Heart left ventricle (tissue), 16 donors: ENCODE measurements at regions of chr5 and their contacts with region 1.

Region 1: DNA sequence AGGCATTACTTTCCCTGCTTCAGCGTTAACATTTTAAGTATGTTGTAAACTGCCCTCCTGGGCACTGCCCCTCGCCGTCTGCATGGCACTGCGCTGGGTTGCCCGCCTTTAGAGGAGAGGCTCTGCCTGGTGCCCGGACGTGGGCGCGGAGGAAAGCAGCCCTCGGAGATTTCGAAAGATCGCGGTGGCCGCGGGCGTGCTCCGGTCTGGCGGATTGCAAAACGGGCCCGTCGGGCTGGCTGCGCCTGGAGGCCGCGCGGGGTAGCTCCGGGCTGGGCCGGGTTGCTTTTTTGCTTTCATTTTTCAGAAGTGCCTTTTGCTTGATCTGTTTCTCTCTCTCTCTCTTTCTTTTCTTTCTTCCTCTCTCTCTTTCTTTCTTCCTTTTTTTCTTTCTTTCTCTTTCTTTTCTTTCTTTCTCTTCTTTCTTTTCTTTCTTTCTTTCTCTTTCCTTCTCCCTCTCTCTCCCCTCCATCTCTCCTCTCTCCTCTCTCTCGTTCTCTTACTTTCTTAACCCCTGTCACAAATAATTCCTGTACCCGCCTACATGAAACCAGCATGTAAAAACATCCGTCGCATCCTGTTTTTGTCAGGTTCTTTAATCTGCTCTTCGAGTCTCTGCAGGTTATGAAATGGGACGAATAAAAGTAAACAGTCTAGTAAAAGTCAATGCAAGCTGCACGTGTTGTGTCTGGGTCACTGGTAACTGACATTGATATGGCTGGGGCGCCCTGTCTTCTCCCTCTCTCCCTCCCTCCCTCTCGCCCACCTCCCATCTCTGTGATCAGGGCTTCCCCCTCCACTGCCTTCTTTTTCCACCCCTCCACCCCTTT is 1.7 kb downstream of the FST start:
- DNase-seq: peak; percentile 49 to 88 (median 74)
- ATAC-seq: peak; percentile 59 to 83 (median 72)
- H3K4me3 ChIP-seq: peak overlapping the region; percentile 16 to 93 (median 70)
- H3K27ac ChIP-seq: peak overlapping the region in 10 of 12 donors; percentile 15 to 68 (median 56)
- H3K4me1 ChIP-seq: peaks cover 0 to 38% (median 7%) of the 10 kb centered on the region in 12 donors
- H3K27me3 ChIP-seq: peaks cover 0 to 24% (median 0%) of the 10 kb centered on the region in 9 donors
- CTCF ChIP-seq: peak in 6 of 12 donors; percentile 8 to 42 (median 17)
- POLR2A ChIP-seq: no peak

Region 2: DNA sequence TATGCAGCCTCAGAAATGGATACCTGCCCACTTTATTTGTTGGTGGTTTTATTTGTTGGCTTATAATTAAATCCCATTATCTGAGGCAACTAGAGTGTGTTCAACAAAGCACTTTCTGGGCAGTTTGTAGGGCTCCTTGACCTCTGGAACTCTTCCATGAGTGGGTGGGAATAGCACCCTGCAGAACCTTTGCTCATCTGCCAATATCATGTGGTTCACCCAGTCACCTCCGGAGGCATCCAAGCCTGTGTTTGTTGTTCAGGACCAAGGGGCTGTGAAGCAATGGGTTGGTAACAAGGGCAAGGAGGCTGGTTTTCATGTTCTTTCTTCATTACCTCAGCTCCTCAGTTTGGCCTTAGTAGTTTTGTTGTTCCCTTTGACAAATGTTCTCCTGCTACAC is 392.3 kb after region 1 on chr5:
- intact Hi-C with region 1: loop called in 9 of 10 experiments (anchors 2 to 10 kb)
- DNase-seq: no peak
- ATAC-seq: no peak
- H3K4me3 ChIP-seq: no peak overlapping the region
- H3K27ac ChIP-seq: no peak overlapping the region
- H3K4me1 ChIP-seq: no peaks in the 10 kb centered on the region
- H3K27me3 ChIP-seq: no peaks in the 10 kb centered on the region
- CTCF ChIP-seq: peak in 1 of 12 donors; percentile 5
- POLR2A ChIP-seq: no peak

Region 3: DNA sequence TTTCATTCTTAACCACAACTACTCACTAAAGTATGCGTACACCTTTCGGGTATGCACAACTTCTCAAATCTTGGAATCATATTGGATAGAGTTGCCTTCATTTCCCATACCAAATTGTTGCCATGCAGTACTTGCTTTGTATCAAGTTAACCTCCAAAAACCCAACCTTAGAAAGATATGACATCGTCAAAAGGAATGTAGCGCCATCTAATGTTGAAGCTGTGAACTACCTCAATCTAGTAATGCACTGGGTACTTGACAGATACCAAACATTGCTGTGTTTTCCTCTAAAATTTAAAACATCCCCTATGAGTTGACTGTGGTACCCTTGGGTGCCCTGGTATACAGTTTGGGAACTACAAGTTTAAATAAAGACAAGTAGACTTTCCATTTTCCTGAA is 509.8 kb after region 1 on chr5:
- intact Hi-C with region 1: loop called in 6 of 10 experiments (anchors 5 to 10 kb)
- DNase-seq: no peak
- ATAC-seq: peak in 1 of 4 donors; percentile 16
- H3K4me3 ChIP-seq: no peak overlapping the region
- H3K27ac ChIP-seq: no peak overlapping the region
- H3K4me1 ChIP-seq: no peaks in the 10 kb centered on the region
- H3K27me3 ChIP-seq: no peaks in the 10 kb centered on the region
- CTCF ChIP-seq: peak in 11 of 12 donors; percentile 23 to 50 (median 43)
- POLR2A ChIP-seq: no peak

Region 4: GRCh38 chr5:54229041-54229780 is 747.1 kb after region 1 on chr5:
- intact Hi-C with region 1: loop called in 5 of 10 experiments (anchors 5 kb)
- DNase-seq: peak; percentile 54 to 77 (median 65)
- ATAC-seq: peak in 3 of 4 donors; percentile 63 to 76 (median 73)
- H3K4me3 ChIP-seq: no peak overlapping the region
- H3K27ac ChIP-seq: no peak overlapping the region
- H3K4me1 ChIP-seq: peaks cover 0 to 51% (median 21%) of the 10 kb centered on the region in 12 donors
- H3K27me3 ChIP-seq: no peaks in the 10 kb centered on the region
- CTCF ChIP-seq: peak; percentile 84 to 95 (median 91)
- POLR2A ChIP-seq: no peak